ENCODE measurements at regions of chr5 and their contacts with region 1.

Region 1: GRCh38 chr5:435961-436640 is 6.9 kb upstream of the EXOC3 start:
- DNase-seq: peak; percentile 63
- H3K4me3 ChIP-seq: no peak overlapping the region
- H3K27ac ChIP-seq: no peak overlapping the region
- H3K4me1 ChIP-seq: peaks cover 0 to 14% (median 12%) of the 10 kb centered on the region in 6 donors
- H3K27me3 ChIP-seq: peaks cover 0 to 19% (median 0%) of the 10 kb centered on the region in 7 donors
- CTCF ChIP-seq: peak in 2 of 11 experiments; percentile 17 to 19
- POLR2A ChIP-seq: no peak

Region 2: DNA sequence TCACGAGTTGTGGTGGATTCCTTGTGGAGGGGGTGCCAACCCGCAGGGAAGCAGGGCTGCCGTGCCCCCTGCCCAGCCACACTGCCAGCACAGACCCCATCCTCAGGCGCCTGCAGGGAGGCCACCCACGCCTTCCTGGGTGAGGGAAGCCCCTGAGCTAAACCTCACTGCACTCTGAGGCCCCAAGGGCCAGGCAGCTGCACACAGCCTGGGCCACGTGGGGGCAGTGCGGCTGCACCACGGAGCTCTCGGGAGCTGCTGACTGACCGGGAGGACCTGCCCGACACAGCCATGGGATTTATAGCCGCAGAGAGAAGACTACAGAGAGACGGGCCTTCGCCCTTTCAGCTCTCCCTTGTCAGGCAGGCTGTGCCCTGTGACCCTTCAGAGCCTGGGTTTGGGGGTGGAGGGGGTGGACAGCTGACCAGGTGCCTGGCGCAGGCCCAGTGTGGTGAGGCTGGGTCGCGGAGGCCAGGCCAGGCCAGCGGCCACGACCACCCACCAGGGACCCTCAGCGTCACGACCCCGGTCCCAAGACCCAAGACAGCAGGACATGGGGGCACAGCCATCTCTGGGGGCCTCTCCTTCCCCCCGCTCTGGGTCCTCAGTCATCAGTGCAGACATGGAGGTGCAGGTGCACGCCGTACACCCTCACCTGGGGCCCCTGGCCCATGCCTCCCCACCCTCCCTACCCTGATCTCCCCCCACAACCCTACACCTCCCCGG is 118.9 kb before region 1 on chr5:
- intact Hi-C with region 1: loop called (anchors 5 kb)
- DNase-seq: no peak
- H3K4me3 ChIP-seq: no peak overlapping the region
- H3K27ac ChIP-seq: no peak overlapping the region
- H3K4me1 ChIP-seq: peaks cover 9 to 43% (median 28%) of the 10 kb centered on the region in 6 donors
- H3K27me3 ChIP-seq: peaks cover 4 to 40% (median 32%) of the 10 kb centered on the region in 7 donors
- CTCF ChIP-seq: peak in 9 of 11 experiments; percentile 20 to 73 (median 52)
- POLR2A ChIP-seq: no peak

Measured in spleen (tissue), 13 donors.